Dorsolateral prefrontal cortex (tissue), 120 donors: ENCODE measurements at regions of chr15 and their contacts with region 1.

Region 1: GRCh38 chr15:26126070-26126469 is 262.9 kb upstream of the ATP10A start:
- DNase-seq: peak in 9 of 10 donors; percentile 23 to 76 (median 64)
- H3K4me3 ChIP-seq: no peak overlapping the region
- H3K27ac ChIP-seq: peak overlapping the region in 4 of 59 donors; percentile 7 to 34 (median 22)
- H3K27me3 ChIP-seq: no peaks in the 10 kb centered on the region
- CTCF ChIP-seq: peak in 16 of 56 donors; percentile 7 to 34 (median 16)

Region 2: GRCh38 chr15:26037369-26037768 is 88.7 kb before region 1 on chr15:
- intact Hi-C with region 1: loop called in 1 of 2 experiments (anchors 10 kb)
- DNase-seq: no peak
- H3K4me3 ChIP-seq: no peak overlapping the region
- H3K27ac ChIP-seq: peak overlapping the region in 5 of 59 donors; percentile 3 to 48 (median 28)
- H3K27me3 ChIP-seq: no peaks in the 10 kb centered on the region
- CTCF ChIP-seq: peak in 43 of 56 donors; percentile 10 to 63 (median 35)